ENCODE measurements at regions of chr1 and their contacts with region 1.

Region 1: DNA sequence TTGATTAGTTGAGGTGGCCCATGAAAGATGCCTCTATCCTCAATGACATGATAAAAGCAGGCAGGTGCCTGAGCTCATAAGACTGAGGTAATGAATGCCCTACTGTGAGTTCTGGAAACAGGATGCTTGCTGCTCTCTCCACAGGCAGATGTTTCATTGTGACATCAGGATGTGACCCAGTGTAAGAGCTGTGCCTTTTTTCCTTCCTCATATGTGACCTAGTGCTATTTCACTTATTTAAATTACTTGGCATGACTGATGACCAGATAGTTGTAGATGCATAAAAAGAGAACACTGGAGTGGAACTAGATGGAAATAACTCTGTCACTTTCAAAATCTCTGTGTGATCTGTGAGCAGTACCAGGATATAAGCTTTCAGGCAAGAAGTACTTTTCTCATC is 31.9 kb downstream of the KIF14 start:
- DNase-seq: no peak
- H3K4me3 Mint-ChIP-seq: no peak overlapping the region
- H3K27ac Mint-ChIP-seq: no peak overlapping the region
- H3K4me1 Mint-ChIP-seq: no peaks in the 10 kb centered on the region
- H3K27me3 Mint-ChIP-seq: no peaks in the 10 kb centered on the region

Region 2: GRCh38 chr1:200526709-200527612 is 61.7 kb before region 1 on chr1:
- CTCF ChIA-PET with region 1: no interaction called
- POLR2A ChIA-PET with region 1: no interaction called
- intact Hi-C with region 1: no loop called
- DNase-seq: no peak
- H3K4me3 Mint-ChIP-seq: no peak overlapping the region
- H3K27ac Mint-ChIP-seq: no peak overlapping the region
- H3K4me1 Mint-ChIP-seq: peaks cover 18% of the 10 kb centered on the region
- H3K27me3 Mint-ChIP-seq: no peaks in the 10 kb centered on the region

Region 3: DNA sequence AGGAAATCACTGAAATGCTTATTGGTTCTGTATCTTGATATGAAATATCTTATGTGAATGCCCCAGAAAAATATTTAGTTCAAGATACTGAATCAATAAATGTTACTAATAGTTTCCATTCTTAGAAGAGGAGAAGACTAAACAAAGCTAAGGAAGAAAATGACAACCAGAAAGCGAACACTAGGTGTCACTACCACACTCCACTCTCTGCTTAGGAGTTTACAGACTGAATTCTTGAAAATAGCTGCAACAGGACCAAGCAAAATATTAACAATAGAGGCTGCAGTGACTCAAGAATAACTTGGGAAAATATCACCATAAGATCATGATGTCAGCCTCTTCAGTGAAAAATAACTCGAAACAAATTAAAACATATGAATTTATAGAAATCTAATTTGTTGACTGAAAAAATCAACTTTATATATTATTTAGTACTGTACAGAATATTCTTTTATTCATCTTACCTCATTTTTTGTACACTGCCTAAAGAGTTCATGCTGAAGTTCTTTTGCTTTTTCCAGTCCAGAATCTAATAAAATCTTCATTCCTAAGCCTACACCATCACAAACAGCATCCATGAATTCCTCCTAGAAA is 29.7 kb before region 1 on chr1:
- CTCF ChIA-PET with region 1: interaction called, 6 read pairs
- POLR2A ChIA-PET with region 1: no interaction called
- intact Hi-C with region 1: loop called (anchors 2 kb)
- DNase-seq: no peak
- H3K4me3 Mint-ChIP-seq: no peak overlapping the region
- H3K27ac Mint-ChIP-seq: no peak overlapping the region
- H3K4me1 Mint-ChIP-seq: peaks cover 8% of the 10 kb centered on the region
- H3K27me3 Mint-ChIP-seq: no peaks in the 10 kb centered on the region

Region 4: GRCh38 chr1:200639790-200640669 is 51.3 kb after region 1 on chr1:
- CTCF ChIA-PET with region 1: no interaction called
- POLR2A ChIA-PET with region 1: no interaction called
- intact Hi-C with region 1: no loop called
- DNase-seq: peak; percentile 59
- H3K4me3 Mint-ChIP-seq: no peak overlapping the region
- H3K27ac Mint-ChIP-seq: no peak overlapping the region
- H3K4me1 Mint-ChIP-seq: peaks cover 9% of the 10 kb centered on the region
- H3K27me3 Mint-ChIP-seq: no peaks in the 10 kb centered on the region

Measured in activated CD4-positive, alpha-beta memory T cell treated with anti-CD3 and anti-CD28 coated beads for 36 hours (primary cell).